Posterior vena cava (tissue), 2 donors: ENCODE measurements at regions of chr16 and their contacts with region 1.

Region 1: GRCh38 chr16:23835390-23836077 is at the start of gene PRKCB:
- DNase-seq: peak; percentile 95
- total RNA-seq, gene PRKCB: 17.5 to 26.9 TPM

Region 2: DNA sequence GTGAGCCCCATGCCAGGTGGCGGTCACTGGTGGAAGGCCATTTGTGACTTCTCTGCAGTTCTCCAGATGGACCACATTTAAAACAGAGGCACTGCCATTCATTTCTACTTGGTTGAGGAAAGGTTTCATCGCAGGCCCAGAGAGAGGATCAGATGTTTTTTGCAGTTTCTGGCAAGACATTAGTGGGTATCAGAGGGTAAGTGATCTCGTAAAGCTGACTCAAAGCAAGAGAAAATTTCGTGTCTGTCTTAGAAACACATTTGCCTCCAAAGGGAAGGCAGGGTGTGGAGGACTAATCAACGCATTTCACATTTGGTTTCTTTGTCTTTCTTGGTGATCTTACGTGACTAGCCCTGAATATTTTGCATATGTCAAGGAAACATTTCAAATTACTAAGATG is 82.1 kb after region 1 on chr16:
- intact Hi-C with region 1: loop called in 1 of 2 experiments (anchors 10 kb)
- DNase-seq: no peak